ENCODE measurements at regions of chr11 and their contacts with region 1.

Region 1: GRCh38 chr11:93796441-93797231 is 12.6 kb downstream of the MED17 start:
- DNase-seq: no peak
- ATAC-seq: no peak
- H3K4me3 ChIP-seq: no peak overlapping the region
- H3K27ac ChIP-seq: no peak overlapping the region
- H3K4me1 ChIP-seq: no peaks in the 10 kb centered on the region
- H3K27me3 ChIP-seq: no peaks in the 10 kb centered on the region
- CTCF ChIP-seq: no peak

Region 2: DNA sequence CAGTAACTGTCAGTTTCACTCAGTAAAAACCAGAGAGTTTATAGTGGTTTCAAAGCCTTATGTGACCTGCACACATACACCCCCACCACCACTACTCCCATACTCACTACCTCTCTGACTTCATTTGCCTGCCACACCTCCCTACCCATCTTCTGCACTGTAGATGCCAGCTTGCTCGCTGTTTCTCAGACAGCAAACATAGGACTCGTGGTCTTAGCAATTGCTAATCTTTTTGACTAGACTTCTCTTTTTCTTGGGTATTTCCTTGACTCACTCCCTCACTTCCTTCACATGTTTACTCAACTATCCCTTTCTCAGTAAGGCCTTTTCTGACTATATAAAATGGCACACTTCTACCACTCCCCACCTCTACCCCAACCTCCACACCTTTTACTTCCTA is 107.4 kb before region 1 on chr11:
- intact Hi-C with region 1: loop called in 1 of 2 experiments (anchors 10 kb)
- DNase-seq: no peak
- ATAC-seq: no peak
- H3K4me3 ChIP-seq: no peak overlapping the region
- H3K27ac ChIP-seq: no peak overlapping the region
- H3K4me1 ChIP-seq: no peaks in the 10 kb centered on the region
- H3K27me3 ChIP-seq: no peaks in the 10 kb centered on the region
- CTCF ChIP-seq: no peak

Region 3: DNA sequence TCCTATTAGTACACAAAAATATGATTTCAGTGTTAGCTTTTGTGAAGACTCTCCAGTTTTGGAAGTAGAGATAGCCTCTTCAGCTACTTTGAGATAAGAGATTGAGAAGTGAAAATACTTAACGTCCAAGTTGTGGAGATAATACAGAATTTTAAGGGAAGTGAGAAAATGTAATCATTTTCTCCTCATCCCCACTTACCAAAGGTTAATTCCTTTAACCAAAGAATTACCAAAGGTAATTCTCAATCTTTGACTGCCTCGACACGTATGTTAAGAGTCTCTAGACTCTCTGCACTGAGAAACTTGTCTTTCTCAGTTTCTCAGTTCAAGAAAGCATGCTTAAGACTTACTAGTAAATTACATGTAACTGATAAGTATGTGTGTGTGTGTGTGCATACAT is 39.9 kb before region 1 on chr11:
- intact Hi-C with region 1: loop called in 1 of 2 experiments (anchors 5 kb)
- DNase-seq: no peak
- ATAC-seq: no peak
- H3K4me3 ChIP-seq: no peak overlapping the region
- H3K27ac ChIP-seq: no peak overlapping the region
- H3K4me1 ChIP-seq: no peaks in the 10 kb centered on the region
- H3K27me3 ChIP-seq: no peaks in the 10 kb centered on the region
- CTCF ChIP-seq: no peak